Activated CD4-positive, alpha-beta memory T cell treated with anti-CD3 and anti-CD28 coated beads for 36 hours (primary cell): ENCODE measurements at regions of chr4 and their contacts with region 1.

Region 1: GRCh38 chr4:183261953-183262775 is 57.9 kb downstream of the CLDN22 start:
- DNase-seq: peak; percentile 86
- H3K4me3 Mint-ChIP-seq: no peak overlapping the region
- H3K27ac Mint-ChIP-seq: peak overlapping the region; percentile 33
- H3K4me1 Mint-ChIP-seq: peaks cover 7% of the 10 kb centered on the region
- H3K27me3 Mint-ChIP-seq: peaks cover 2% of the 10 kb centered on the region

Region 2: DNA sequence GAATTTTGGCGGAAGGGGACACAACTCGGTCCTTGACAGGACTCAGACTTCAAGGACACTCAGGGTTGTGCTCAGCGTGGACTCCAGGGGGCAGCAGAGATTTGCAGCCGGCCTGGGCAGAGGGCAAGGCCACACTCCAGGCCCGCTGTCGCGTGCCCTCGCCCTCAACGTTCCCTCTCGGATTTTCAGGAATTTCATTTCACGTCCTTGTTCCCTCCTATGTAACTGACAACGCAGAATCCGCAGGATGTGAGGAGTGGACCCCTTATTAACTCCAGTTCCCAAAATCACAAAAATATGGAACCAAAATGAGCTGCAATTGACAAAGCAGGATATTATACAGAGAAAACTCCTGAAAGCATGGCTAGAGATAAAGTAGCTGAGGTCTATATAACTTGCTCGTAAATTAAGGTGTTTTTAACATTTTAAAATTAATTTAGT is 323.9 kb before region 1 on chr4:
- CTCF ChIA-PET with region 1: interaction called, 117 read pairs
- POLR2A ChIA-PET with region 1: no interaction called
- intact Hi-C with region 1: loop called (anchors 1 kb)
- DNase-seq: peak; percentile 81
- H3K4me3 Mint-ChIP-seq: no peak overlapping the region
- H3K27ac Mint-ChIP-seq: no peak overlapping the region
- H3K4me1 Mint-ChIP-seq: no peaks in the 10 kb centered on the region
- H3K27me3 Mint-ChIP-seq: peaks cover 15% of the 10 kb centered on the region

Region 3: GRCh38 chr4:183074296-183074990 is 187.7 kb before region 1 on chr4:
- CTCF ChIA-PET with region 1: interaction called, 183 read pairs
- POLR2A ChIA-PET with region 1: interaction called, 3 read pairs
- intact Hi-C with region 1: loop called (anchors 1 kb)
- DNase-seq: no peak
- H3K4me3 Mint-ChIP-seq: no peak overlapping the region
- H3K27ac Mint-ChIP-seq: no peak overlapping the region
- H3K4me1 Mint-ChIP-seq: no peaks in the 10 kb centered on the region
- H3K27me3 Mint-ChIP-seq: no peaks in the 10 kb centered on the region

Region 4: DNA sequence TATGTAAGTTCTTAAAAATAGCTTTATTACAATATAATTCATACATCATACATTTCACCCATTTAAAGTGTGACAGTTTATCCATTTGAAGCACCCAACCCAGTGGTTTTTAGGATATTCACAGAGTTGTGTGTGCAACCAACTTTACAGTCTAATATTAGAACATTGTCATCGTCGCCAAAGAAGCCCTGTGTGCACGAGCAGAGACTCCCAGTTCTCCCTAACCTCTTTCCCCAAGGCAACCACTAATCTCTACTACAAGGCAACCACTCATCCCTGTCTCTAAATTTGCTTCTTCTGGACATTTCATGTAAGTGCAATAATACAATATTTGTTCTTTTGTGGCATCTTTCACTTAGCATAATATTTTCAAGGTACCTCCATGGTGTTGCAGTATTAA is 10.2 kb after region 1 on chr4:
- CTCF ChIA-PET with region 1: interaction called, 15 read pairs
- POLR2A ChIA-PET with region 1: no interaction called
- intact Hi-C with region 1: no loop called
- DNase-seq: no peak
- H3K4me3 Mint-ChIP-seq: no peak overlapping the region
- H3K27ac Mint-ChIP-seq: no peak overlapping the region
- H3K4me1 Mint-ChIP-seq: no peaks in the 10 kb centered on the region
- H3K27me3 Mint-ChIP-seq: no peaks in the 10 kb centered on the region

Region 5: GRCh38 chr4:183388777-183389176 is 126.6 kb after region 1 on chr4:
- CTCF ChIA-PET with region 1: no interaction called
- POLR2A ChIA-PET with region 1: no interaction called
- intact Hi-C with region 1: no loop called
- DNase-seq: no peak
- H3K4me3 Mint-ChIP-seq: no peak overlapping the region
- H3K27ac Mint-ChIP-seq: no peak overlapping the region
- H3K4me1 Mint-ChIP-seq: peaks cover 4% of the 10 kb centered on the region
- H3K27me3 Mint-ChIP-seq: peaks cover 10% of the 10 kb centered on the region

Region 6: DNA sequence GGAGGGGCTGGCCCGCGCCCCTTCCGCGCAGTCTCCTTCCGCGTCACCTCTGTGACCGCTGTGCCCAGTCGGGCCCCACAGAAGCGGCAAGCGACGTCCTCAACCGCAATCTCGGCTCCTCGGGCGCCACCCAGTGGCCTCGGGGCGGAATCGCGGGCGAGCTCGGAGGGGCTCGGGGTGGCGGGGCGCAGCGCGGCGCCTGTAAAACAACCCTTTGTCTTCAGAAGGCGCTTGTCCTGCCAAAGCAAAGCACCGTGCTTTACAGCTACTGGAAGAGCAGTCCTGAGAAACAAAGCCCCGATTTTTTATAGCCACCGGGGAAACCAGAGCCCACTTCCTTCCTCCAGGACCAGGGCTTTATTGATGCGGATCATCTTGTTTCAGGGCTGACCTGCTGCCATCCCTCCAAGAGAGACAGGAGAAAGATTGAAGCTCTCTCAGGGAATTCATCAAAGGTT is 145.0 kb after region 1 on chr4:
- CTCF ChIA-PET with region 1: interaction called, 4 read pairs
- POLR2A ChIA-PET with region 1: no interaction called
- intact Hi-C with region 1: loop called (anchors 1 kb)
- DNase-seq: peak; percentile 94
- H3K4me3 Mint-ChIP-seq: peak overlapping the region; percentile 66
- H3K27ac Mint-ChIP-seq: peak overlapping the region; percentile 59
- H3K4me1 Mint-ChIP-seq: peaks cover 13% of the 10 kb centered on the region
- H3K27me3 Mint-ChIP-seq: no peaks in the 10 kb centered on the region